Mammary epithelial cell (primary cell): ENCODE measurements at regions of chr2 and their contacts with region 1.

Region 1: DNA sequence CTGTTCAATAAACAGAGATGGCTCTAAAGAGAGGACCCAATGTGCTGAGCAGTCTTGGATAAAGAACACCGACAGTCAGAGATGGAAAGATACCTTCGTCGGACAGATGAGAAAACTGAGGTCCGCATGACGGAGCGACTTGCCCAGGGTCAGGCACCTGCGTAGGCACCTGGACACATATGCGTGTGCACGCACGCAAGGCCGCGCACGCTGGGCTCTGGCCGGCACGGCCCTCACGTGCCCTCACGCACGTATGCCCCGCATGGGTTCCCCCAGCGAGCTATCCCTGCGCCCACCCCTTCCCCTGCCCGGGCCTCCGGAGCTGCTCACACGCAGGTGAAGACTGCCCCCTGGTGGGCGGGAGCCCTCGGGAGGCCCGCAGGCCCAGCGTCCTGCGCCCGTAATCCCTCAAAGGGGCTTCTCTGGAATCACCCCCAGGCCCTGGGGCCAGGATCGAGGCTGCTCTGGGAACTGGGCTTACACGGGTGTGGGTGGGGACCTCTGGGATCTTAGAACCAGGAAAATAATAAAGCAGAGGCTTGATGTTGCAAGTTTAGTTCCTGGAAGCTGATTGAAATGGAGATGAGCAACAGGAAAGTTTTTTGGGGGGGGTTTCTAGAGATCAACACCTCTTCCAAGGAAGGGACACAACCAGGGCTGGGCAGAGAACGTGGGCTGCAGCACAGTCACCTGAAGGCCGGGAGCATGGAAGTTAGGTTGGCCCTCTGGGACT is 246.3 kb downstream of the TNS1 start:
- DNase-seq: no peak
- H3K4me3 ChIP-seq: no peak overlapping the region
- H3K27ac ChIP-seq: no peak overlapping the region
- H3K4me1 ChIP-seq: no peaks in the 10 kb centered on the region
- H3K27me3 ChIP-seq: peaks cover 3% of the 10 kb centered on the region
- CTCF ChIP-seq: peak; percentile 58 to 91

Region 2: GRCh38 chr2:217593732-217594131 is 162.8 kb before region 1 on chr2:
- CTCF ChIA-PET with region 1: no interaction called
- dilution Hi-C with region 1: no loop called
- in situ Hi-C with region 1: no loop called
- intact Hi-C with region 1: no loop called
- DNase-seq: no peak
- H3K4me3 ChIP-seq: no peak overlapping the region
- H3K27ac ChIP-seq: no peak overlapping the region
- H3K4me1 ChIP-seq: no peaks in the 10 kb centered on the region
- H3K27me3 ChIP-seq: peaks cover 5% of the 10 kb centered on the region
- CTCF ChIP-seq: no peak

Region 3: GRCh38 chr2:217650716-217651360 is 105.7 kb before region 1 on chr2:
- CTCF ChIA-PET with region 1: no interaction called
- dilution Hi-C with region 1: no loop called
- in situ Hi-C with region 1: no loop called
- intact Hi-C with region 1: loop called (anchors 5 kb)
- DNase-seq: peak; percentile 63
- H3K4me3 ChIP-seq: no peak overlapping the region
- H3K27ac ChIP-seq: no peak overlapping the region
- H3K4me1 ChIP-seq: peaks cover 12% of the 10 kb centered on the region
- H3K27me3 ChIP-seq: no peaks in the 10 kb centered on the region
- CTCF ChIP-seq: peak; percentile 92

Region 4: DNA sequence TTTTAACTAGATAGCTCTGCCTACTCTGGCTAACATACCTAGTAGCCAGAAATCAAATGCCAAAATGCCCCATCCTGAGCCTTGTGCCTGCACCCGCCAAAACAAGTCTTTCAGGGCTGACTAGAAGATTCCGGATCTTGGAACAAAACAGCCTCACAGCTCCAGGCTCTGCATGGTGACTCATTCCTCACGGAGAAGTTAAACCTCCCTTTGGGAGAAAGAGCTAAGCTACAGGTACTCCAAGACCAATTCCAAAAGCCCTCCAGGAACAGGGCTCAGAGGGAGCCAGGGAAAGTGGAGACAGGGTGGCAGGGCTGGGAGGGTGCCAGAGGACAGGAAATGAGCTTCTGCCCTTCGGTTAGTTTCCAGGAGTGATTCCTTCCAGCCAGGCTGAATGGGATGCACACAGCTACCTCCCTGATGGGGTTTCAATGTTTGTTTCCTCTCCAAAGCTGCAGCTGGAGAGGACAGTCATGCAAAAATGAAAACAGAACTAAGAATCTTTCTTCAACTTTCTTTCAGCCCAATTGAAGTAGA is 49.3 kb before region 1 on chr2:
- CTCF ChIA-PET with region 1: no interaction called
- dilution Hi-C with region 1: no loop called
- in situ Hi-C with region 1: no loop called
- intact Hi-C with region 1: no loop called
- DNase-seq: peak; percentile 92
- H3K4me3 ChIP-seq: no peak overlapping the region
- H3K27ac ChIP-seq: peak overlapping the region; percentile 0
- H3K4me1 ChIP-seq: peaks cover 19% of the 10 kb centered on the region
- H3K27me3 ChIP-seq: no peaks in the 10 kb centered on the region
- CTCF ChIP-seq: no peak

Region 5: GRCh38 chr2:218033590-218034496 is 277.3 kb after region 1 on chr2:
- CTCF ChIA-PET with region 1: no interaction called
- dilution Hi-C with region 1: no loop called
- in situ Hi-C with region 1: no loop called
- intact Hi-C with region 1: no loop called
- DNase-seq: no peak
- H3K4me3 ChIP-seq: no peak overlapping the region
- H3K27ac ChIP-seq: no peak overlapping the region
- H3K4me1 ChIP-seq: peaks cover 17% of the 10 kb centered on the region
- H3K27me3 ChIP-seq: no peaks in the 10 kb centered on the region
- CTCF ChIP-seq: no peak